BJ (cell line): ENCODE measurements at regions of chr1 and their contacts with region 1.

Region 1: DNA sequence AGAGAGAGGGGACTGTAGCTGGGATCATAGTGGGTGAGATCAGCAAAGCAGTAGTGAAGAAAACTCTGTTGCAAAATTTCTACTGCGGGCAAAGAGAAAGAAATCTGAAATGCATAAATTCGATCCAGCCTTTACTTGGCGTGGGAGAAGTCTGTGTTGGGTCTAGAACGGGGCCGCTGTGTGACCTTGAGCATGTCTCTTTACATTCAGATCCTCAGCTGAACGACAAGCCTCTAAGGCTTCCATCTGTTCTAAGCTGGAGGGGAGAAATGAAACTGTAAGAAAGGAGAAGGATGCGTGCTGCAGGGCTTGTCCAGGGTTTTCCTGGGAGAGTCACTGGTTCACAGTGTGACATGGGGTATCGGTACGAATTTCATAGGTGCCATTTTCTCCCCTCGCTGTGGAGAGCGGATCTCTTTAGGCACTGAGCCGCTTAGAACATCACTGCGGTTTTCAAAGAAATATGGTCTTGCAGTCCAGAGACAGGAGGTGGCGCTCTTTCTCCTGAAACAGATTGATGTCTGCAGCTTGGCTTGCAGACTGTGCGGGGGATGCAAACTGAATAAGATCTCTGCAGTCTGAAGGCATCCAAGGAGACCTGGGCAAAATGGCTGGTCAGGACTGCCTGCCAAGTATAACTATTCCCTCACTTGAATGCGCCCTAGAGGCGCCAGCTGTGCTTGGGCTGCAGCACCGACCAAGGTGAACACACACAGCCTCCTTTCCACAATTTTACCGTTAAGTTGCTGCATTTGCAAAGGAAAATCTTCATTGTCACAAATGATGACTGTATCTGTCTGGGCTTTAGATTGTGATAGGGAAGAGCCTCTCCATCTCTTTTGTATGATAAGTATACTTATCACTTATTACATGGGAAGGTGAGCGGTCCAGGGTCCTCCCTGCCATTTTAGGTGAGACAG is 104.1 kb downstream of the XCL2 start:
- DNase-seq: peak; percentile 35
- H3K4me3 ChIP-seq: peak overlapping the region; percentile 19
- H3K27me3 ChIP-seq: peaks cover 6% of the 10 kb centered on the region
- CTCF ChIP-seq: peak; percentile 85

Region 2: DNA sequence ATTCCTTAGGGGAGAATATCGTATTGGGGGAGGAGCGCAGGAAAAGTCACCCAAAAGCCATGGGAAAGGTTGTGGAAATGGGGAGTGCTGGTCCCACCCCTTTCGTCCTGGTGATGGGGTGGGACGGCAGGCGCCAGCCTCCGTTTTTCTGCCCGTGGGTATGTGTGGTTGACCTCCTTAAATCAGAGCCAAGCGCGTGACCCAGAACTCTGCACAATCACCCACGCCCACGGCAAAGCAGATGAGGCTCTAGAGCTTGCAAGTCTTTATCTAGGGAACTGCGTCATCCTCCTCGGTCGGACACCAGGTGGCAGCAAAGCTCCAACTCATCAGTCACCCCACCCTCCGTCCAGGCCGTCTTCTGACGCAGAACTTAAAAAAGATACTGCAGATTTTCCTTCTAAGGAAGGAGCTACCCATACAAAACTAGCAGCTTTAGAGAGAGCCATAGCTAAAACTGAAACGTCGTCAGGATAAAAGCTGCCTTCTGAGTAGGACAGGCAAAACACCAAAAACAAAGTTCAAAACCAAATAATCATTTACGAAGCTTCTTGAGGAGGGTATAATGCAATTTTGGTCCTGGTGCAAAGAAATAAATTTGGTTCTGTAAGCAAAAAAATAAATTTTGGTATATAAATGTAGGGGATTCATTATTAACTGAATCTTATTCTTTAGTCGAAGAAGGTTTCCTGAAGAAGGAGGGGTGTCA is 97.0 kb before region 1 on chr1:
- CTCF ChIA-PET with region 1: interaction called, 28 read pairs
- POLR2A ChIA-PET with region 1: no interaction called
- DNase-seq: peak; percentile 66
- H3K4me3 ChIP-seq: peak overlapping the region; percentile 14; the same call in 1 of the 2 replicates
- H3K27me3 ChIP-seq: no peaks in the 10 kb centered on the region
- CTCF ChIP-seq: peak; percentile 84

Region 3: GRCh38 chr1:168428063-168428731 is 11.5 kb before region 1 on chr1:
- CTCF ChIA-PET with region 1: interaction called, 14 read pairs
- POLR2A ChIA-PET with region 1: no interaction called
- DNase-seq: no peak
- H3K4me3 ChIP-seq: no peak overlapping the region
- H3K27me3 ChIP-seq: no peaks in the 10 kb centered on the region
- CTCF ChIP-seq: no peak

Region 4: GRCh38 chr1:168469690-168470089 is 30.0 kb after region 1 on chr1:
- CTCF ChIA-PET with region 1: interaction called, 17 read pairs
- POLR2A ChIA-PET with region 1: no interaction called
- DNase-seq: peak; percentile 95
- H3K4me3 ChIP-seq: no peak overlapping the region
- H3K27me3 ChIP-seq: no peaks in the 10 kb centered on the region
- CTCF ChIP-seq: no peak

Region 5: DNA sequence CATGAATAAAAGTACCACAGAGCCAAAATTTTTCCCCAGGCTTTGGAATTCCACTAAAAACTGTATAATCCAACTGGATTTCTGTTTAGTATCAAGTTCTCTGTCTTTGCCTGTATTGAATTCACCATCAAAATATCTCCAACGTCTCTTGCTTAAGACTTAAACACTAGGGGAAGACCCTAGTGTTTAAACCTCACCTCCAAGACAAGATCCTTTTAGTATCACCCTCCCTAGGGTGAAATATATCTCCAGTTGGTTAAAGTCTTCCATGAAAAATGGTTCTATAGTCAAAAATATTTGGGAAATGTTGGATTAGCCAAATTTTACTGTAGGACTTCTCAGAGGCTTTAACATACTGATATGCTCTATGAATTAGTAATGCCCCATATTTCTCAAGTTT is 128.6 kb after region 1 on chr1:
- CTCF ChIA-PET with region 1: interaction called, 23 read pairs
- POLR2A ChIA-PET with region 1: no interaction called
- DNase-seq: no peak
- H3K4me3 ChIP-seq: no peak overlapping the region
- H3K27me3 ChIP-seq: no peaks in the 10 kb centered on the region
- CTCF ChIP-seq: no peak

Region 6: DNA sequence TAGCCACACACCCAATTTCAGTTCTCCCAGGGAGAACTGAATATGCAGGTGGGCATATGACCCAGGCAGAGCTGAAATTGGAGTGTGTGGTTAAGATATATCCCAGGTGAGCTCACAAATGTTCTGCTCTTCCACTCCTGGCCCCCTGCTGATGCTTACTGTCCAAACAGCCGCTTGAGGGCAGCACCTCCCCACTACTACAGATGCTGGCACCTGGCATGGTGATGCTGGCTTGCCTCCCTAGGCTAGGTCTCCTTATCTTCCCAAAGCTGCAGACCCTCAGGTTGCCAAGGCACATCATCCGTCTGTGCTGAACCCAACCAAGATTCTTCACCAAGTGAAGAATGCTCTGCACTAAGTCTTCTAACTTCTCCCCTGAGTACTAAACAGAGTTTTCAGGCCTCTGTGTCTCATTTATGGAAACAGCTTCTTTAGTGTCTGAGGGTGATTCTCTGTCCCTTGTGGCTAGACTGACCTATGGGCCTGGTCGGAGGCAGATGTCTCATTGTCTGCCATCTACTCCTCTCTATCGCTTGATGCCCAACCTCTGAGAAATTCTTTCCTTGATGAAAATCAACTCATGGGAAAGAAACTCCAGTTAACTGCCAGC is 163.9 kb after region 1 on chr1:
- CTCF ChIA-PET with region 1: interaction called, 14 read pairs
- POLR2A ChIA-PET with region 1: no interaction called
- DNase-seq: no peak
- H3K4me3 ChIP-seq: no peak overlapping the region
- H3K27me3 ChIP-seq: no peaks in the 10 kb centered on the region
- CTCF ChIP-seq: peak; percentile 81